PC-9 (cell line): ENCODE measurements at regions of chr11 and their contacts with region 1.

Region 1: DNA sequence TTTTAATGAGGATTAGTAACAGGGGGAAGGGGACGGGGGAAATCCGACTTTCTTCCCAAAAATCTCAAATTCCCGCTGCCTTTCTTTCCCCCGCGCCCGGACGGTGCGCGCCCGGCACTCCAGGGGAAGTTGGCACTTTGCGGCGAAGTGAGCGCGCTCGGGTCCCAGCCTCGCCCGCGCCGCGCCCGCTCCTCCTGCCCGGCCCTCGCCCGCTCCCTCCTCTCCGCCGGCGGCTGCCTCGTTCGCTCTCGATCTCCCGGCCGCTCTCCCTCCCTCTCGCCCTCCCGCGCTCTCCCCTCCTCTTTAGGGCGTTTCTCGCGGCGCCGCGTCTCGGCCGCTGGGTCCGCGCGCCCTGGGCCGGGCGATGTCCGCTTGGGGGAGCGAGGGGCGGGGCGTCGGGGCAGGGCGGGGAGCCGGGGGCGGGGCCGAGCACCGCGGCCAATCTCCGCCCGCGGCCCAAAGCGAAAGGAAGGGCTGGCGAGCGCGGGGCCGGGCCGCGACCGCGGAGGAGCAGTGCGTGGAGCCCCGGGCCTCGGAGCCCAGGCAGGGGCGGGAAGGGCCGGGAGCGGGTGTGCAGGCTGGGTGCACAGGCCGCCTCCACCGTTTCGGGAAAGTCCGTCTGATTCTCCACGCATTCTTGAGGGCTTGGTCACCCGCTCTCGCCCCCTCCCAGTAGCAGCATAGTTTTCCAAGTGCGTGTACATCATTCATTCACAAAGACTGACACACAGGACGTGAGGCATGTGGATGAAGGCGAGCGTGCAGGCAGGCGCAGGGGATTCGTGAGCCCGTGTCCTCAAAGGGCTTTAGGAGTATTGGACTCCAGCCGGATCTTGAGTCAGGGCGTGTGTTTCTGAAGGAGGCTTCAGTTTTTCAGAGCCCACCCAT is 65.1 kb downstream of the ETS1 start:
- DNase-seq: peak; percentile 93 to 94
- H3K4me3 ChIP-seq: peak overlapping the region; percentile 91
- H3K27ac ChIP-seq: peak overlapping the region; percentile 89
- H3K4me1 ChIP-seq: peaks cover 75% of the 10 kb centered on the region
- H3K27me3 ChIP-seq: no peaks in the 10 kb centered on the region
- CTCF ChIP-seq: no peak

Region 2: DNA sequence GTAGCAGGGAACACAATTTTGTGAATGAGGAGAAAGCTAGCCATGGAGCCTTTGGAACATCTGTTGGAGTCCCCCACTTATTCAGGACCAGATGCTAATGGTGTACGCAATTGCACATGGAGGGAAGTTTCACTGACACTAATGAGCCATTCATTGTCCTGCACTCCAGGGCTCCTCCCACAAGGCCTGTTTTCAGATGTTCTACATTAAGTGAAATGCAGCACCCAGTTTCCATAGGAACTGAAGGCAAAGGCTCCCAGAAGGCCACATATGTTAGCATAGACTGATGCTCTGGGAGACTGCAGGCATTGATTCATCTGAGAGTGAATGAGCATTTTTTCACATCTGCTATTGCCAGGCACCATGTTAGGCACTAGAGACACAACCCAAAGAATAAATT is 334.5 kb before region 1 on chr11:
- CTCF ChIA-PET with region 1: interaction called, 10 read pairs
- POLR2A ChIA-PET with region 1: no interaction called
- intact Hi-C with region 1: no loop called
- DNase-seq: no peak
- H3K4me3 ChIP-seq: no peak overlapping the region
- H3K27ac ChIP-seq: no peak overlapping the region
- H3K4me1 ChIP-seq: no peaks in the 10 kb centered on the region
- H3K27me3 ChIP-seq: no peaks in the 10 kb centered on the region
- CTCF ChIP-seq: no peak

Region 3: GRCh38 chr11:128336203-128336602 is 186.1 kb before region 1 on chr11:
- CTCF ChIA-PET with region 1: no interaction called
- POLR2A ChIA-PET with region 1: no interaction called
- intact Hi-C with region 1: loop called (anchors 1 kb)
- DNase-seq: peak; percentile 88 to 98
- H3K4me3 ChIP-seq: no peak overlapping the region
- H3K27ac ChIP-seq: 0 out of 2 replicates have a peak overlapping the region, but pooled peaks have one; percentile 40
- H3K4me1 ChIP-seq: peaks cover 19% of the 10 kb centered on the region
- H3K27me3 ChIP-seq: no peaks in the 10 kb centered on the region
- CTCF ChIP-seq: peak; percentile 22; the same call in 1 of the 2 replicates

Region 4: GRCh38 chr11:128497061-128497775 is 25.1 kb before region 1 on chr11:
- CTCF ChIA-PET with region 1: no interaction called
- POLR2A ChIA-PET with region 1: interaction called, 3 read pairs
- intact Hi-C with region 1: loop called (anchors 1 kb)
- DNase-seq: peak; percentile 80 to 97
- H3K4me3 ChIP-seq: peak overlapping the region; percentile 49; the same call in 1 of the 2 replicates
- H3K27ac ChIP-seq: peak overlapping the region; percentile 99
- H3K4me1 ChIP-seq: peaks cover 79% of the 10 kb centered on the region
- H3K27me3 ChIP-seq: no peaks in the 10 kb centered on the region
- CTCF ChIP-seq: no peak

Region 5: DNA sequence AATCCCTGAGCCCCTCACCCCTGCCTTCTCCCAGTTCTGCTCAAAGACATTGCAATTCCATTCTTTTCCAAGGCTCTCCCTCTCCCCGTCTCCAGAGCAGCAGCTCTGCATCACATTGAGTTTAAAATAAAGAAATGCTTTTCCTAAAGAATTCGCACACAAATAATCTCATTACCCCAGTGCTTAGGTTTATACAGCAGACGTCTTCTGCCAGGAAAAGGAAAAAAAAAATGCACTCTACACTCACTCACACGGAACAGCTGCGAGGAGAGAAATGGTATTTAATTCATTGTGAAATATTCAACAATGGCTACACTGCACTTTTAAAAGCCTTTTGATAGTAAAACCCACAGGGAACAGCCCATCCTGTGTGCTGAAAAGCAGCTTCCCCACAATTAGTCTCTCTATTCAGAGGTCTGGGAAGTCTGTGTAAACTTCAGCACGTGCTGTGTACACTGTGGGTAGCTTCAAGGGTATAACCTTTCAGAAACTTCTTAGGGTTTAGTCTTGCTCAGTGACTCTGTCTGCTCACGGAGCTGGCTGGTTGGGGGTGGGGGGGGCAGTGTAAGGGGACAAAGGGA is 22.3 kb after region 1 on chr11:
- CTCF ChIA-PET with region 1: interaction called, 10 read pairs
- POLR2A ChIA-PET with region 1: no interaction called
- intact Hi-C with region 1: no loop called
- DNase-seq: no peak
- H3K4me3 ChIP-seq: no peak overlapping the region
- H3K27ac ChIP-seq: no peak overlapping the region
- H3K4me1 ChIP-seq: no peaks in the 10 kb centered on the region
- H3K27me3 ChIP-seq: no peaks in the 10 kb centered on the region
- CTCF ChIP-seq: no peak

Region 6: DNA sequence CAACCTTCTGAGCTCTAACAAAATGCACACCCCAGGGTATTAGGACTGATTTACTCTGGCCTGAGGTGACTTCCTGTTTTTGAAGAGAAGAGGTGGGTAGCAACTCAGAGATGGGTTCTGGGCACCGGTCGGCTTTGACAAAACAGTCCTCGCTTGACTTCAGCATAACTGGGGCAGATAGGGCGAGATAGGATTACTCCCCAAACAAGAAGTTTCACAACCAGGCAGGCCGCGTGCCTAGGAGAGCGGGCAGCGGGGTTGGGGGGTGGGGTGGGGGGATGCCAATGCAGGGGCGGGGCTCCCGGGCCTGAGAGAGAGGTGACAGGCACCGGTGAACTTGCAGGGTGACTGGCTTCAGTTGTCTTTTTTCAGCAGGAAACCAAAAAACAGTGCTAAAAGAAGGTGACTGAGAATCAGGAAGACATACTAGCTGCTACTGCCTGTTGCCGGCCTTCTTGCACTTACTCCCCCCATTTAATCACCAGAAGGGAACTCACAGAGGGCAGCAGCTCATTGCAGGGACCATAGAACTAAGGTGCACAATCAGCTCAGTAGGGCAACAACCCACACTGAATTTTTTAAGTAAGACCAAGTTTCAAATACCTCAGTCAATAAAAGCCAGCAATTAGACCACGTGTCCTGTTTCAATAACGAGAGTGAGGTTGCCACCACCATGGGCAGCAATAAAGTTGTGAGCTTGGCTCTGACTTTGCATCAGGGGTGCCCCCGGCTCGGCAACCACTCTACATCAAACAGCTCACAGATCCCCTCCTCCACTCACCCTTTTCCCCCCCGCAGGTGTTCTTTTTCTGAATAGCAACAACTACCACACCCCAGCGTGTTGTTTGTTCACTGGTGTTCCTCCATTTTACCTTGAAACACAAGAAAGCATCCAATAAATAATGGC is 102.2 kb after region 1 on chr11:
- CTCF ChIA-PET with region 1: no interaction called
- POLR2A ChIA-PET with region 1: interaction called, 3 read pairs
- intact Hi-C with region 1: loop called (anchors 2 kb)
- DNase-seq: peak; percentile 28 to 62
- H3K4me3 ChIP-seq: no peak overlapping the region
- H3K27ac ChIP-seq: peak overlapping the region; percentile 36; the same call in 1 of the 2 replicates
- H3K4me1 ChIP-seq: peaks cover 15% of the 10 kb centered on the region
- H3K27me3 ChIP-seq: no peaks in the 10 kb centered on the region
- CTCF ChIP-seq: no peak

Region 7: GRCh38 chr11:128686021-128686741 is 163.9 kb after region 1 on chr11:
- CTCF ChIA-PET with region 1: no interaction called
- POLR2A ChIA-PET with region 1: interaction called, 18 read pairs
- intact Hi-C with region 1: no loop called
- DNase-seq: no peak
- H3K4me3 ChIP-seq: no peak overlapping the region
- H3K27ac ChIP-seq: no peak overlapping the region
- H3K4me1 ChIP-seq: no peaks in the 10 kb centered on the region
- H3K27me3 ChIP-seq: peaks cover 61% of the 10 kb centered on the region
- CTCF ChIP-seq: no peak

Region 8: DNA sequence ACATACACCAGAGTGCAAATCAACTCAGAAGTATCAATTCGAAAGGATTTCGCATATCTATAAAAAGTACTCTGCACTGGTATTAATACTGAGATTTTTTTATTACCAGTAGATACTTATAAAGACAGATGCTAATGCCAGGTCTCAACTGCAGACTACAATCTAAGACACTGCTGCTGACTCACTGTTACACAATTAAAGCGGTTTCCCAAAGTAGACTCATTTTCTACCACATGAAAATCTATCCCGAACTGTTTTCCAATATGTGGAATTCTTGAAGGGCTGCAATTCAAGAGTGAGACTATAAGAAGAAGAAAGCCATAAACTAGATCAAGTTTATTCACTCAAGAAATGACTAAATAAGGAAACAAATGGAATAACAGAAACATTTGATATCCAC is 727.1 kb after region 1 on chr11:
- CTCF ChIA-PET with region 1: no interaction called
- POLR2A ChIA-PET with region 1: no interaction called
- intact Hi-C with region 1: no loop called
- DNase-seq: no peak
- H3K4me3 ChIP-seq: no peak overlapping the region
- H3K27ac ChIP-seq: no peak overlapping the region
- H3K4me1 ChIP-seq: 0 out of 2 replicates have a peak, but pooled peaks cover 6% of the 10 kb centered on the region
- H3K27me3 ChIP-seq: no peaks in the 10 kb centered on the region
- CTCF ChIP-seq: no peak